SK-N-SH (cell line): ENCODE measurements at regions of chr6 and their contacts with region 1.

Region 1: GRCh38 chr6:107459283-107460082 is at the start of gene PDSS2:
- DNase-seq: peak; percentile 96
- H3K4me3 ChIP-seq: peak within 1 kb of the TSS; percentile 97 to 98
- H3K27ac ChIP-seq: peak within 1 kb of the TSS; percentile 46 to 87; a peak in 3 of 4 replicates
- H3K4me1 ChIP-seq: peaks cover 5 to 8% of the 10 kb centered on the region in 2 experiments; a peak in 3 of 4 replicates
- H3K27me3 ChIP-seq: no peaks in the 10 kb centered on the region
- CTCF ChIP-seq: peak; percentile 71
- EP300 ChIP-seq: peak in 1 of 2 experiments; percentile 29; a peak in 1 of 4 replicates
- RAD21 ChIP-seq: peak; percentile 41
- polyA plus RNA-seq, gene PDSS2: 5.6 and 6.3 TPM in 2 replicates

Region 2: GRCh38 chr6:107248147-107248546 is 211.3 kb before region 1 on chr6:
- CTCF ChIA-PET with region 1: no interaction called
- POLR2A ChIA-PET with region 1: no interaction called
- DNase-seq: no peak
- H3K4me3 ChIP-seq: no peak overlapping the region
- H3K27ac ChIP-seq: no peak overlapping the region
- H3K4me1 ChIP-seq: peaks cover 0 to 5% of the 10 kb centered on the region in 2 experiments; a peak in 2 of 4 replicates
- H3K27me3 ChIP-seq: no peaks in the 10 kb centered on the region
- CTCF ChIP-seq: no peak
- EP300 ChIP-seq: no peak
- RAD21 ChIP-seq: no peak

Region 3: DNA sequence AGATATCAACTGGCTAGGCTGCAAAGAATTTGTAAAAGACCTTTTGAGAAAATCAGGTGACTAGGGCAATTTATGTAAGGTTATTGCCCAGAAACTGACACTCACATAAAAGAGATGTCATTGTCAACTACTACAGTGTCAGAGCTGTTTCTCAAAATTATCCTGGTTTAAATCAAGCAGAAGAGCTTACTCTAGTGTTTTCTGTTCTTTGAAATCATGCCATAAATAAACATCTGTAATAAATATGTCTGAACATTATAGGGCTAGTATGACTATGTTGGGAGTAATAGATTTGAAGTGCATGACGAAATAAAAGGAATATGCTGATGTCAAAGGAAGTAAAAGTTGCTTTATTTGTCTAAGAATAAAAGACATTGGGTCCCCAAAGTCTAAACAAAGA is 10.9 kb after region 1 on chr6:
- CTCF ChIA-PET with region 1: interaction called, 14 read pairs
- POLR2A ChIA-PET with region 1: interaction called, 3 read pairs
- DNase-seq: no peak
- H3K4me3 ChIP-seq: no peak overlapping the region
- H3K27ac ChIP-seq: no peak overlapping the region
- H3K4me1 ChIP-seq: peaks cover 0 to 5% of the 10 kb centered on the region in 2 experiments; a peak in 1 of 4 replicates
- H3K27me3 ChIP-seq: no peaks in the 10 kb centered on the region
- CTCF ChIP-seq: no peak
- EP300 ChIP-seq: no peak
- RAD21 ChIP-seq: no peak

Region 4: DNA sequence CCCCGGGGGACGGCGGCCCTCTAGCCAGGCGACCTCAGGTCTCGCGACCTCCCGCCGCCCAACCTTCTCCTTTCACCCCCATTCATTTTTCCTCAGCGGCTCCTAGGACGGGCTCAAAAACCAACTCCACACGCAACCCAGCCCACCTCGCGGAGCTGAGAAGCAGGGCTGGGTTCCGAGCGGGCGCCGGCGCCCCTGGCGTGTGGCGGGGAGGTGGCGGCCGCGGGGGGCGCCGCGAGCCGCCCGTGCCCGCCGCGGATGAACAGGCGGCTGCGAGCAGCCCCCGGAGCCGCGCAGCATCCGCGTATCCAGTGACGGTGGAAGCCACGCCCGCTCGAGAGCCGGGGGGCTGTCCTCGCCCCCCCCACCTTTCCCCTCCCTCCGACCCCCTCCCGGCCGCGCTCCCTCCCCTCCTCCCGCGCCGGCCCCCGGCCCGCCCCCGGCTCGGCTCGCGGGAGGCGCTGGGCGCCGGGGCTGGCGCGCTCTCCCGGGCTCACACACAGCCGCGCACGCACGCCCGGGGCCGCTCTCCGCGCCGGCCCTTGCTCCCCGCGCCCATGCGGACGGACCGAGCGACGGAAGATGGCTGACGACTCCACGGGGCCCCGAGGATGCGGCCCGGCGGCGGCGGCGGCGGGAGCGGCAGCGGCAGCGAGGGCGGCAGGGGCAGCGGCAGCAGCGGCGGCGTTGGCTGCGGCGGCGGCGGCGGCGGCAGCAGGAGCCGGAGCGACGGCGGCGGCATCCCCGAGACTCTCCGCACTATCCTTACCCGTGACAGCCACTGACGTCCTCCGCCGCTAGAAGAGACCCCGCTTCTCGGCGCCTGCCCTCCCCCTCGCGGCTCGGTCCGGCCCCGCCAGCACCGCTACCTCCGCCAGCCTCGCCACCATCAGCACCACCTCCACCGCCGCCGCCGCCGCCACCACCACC is 30.4 kb after region 1 on chr6 and contains the start of gene SOBP:
- CTCF ChIA-PET with region 1: interaction called, 35 read pairs
- POLR2A ChIA-PET with region 1: interaction called, 21 read pairs
- DNase-seq: peak; percentile 96
- H3K4me3 ChIP-seq: peak within 1 kb of the TSS; percentile 59 to 83
- H3K27ac ChIP-seq: peak within 1 kb of the TSS; percentile 40 to 81; a peak in 3 of 4 replicates
- H3K4me1 ChIP-seq: peaks cover 13 to 23% of the 10 kb centered on the region in 2 experiments
- H3K27me3 ChIP-seq: no peaks in the 10 kb centered on the region
- CTCF ChIP-seq: no peak; the same call in 1 of the 2 replicates
- EP300 ChIP-seq: no peak
- RAD21 ChIP-seq: no peak
- polyA plus RNA-seq, gene SOBP: 0.21 and 0.61 TPM in 2 replicates